Left lung (tissue), 14 donors: ENCODE measurements at regions of chr15 and their contacts with region 1.

Region 1: DNA sequence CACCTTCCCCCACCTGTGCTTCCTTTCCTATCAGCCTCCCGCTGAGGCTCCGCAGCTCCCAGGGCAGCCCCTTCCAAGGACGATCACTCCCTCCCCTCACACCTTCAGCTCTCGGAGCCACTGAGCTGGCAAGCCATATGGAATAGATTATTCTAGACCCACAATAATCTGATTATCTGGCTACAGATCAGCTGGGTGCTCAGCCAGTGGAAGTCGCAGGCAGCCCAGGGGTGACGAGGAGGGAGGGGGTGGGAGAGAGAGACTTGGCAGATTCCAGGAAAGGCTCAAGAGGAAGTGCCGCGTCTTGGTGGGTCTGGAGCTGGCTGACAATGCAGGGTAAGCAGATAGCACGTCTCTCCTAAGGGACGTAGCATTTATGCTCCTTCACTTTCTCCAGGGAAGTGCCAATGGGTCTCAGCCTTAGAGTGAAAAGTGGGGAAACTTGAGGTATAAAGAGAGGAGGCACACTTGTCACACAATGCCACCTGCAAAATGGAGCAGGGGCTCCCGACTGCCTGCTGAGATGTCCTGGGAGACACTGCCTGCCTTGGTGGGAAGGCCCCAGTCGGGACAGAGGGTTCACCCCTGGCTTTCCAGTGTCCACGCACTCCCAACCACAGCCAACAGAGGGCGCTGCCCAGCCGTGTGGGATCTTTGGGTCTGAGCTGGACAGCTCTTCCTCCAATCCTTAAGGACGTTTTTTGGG is 9.4 kb upstream of the MESP1 start:
- DNase-seq: peak in 3 of 4 donors; percentile 71 to 97 (median 80)
- ATAC-seq: peak; percentile 96
- H3K4me3 ChIP-seq: no peak overlapping the region
- H3K27ac ChIP-seq: no peak overlapping the region
- H3K4me1 ChIP-seq: peaks cover 5 to 19% of the 10 kb centered on the region in 2 donors
- H3K27me3 ChIP-seq: no peaks in the 10 kb centered on the region
- CTCF ChIP-seq: peak; percentile 94 to 95

Region 2: DNA sequence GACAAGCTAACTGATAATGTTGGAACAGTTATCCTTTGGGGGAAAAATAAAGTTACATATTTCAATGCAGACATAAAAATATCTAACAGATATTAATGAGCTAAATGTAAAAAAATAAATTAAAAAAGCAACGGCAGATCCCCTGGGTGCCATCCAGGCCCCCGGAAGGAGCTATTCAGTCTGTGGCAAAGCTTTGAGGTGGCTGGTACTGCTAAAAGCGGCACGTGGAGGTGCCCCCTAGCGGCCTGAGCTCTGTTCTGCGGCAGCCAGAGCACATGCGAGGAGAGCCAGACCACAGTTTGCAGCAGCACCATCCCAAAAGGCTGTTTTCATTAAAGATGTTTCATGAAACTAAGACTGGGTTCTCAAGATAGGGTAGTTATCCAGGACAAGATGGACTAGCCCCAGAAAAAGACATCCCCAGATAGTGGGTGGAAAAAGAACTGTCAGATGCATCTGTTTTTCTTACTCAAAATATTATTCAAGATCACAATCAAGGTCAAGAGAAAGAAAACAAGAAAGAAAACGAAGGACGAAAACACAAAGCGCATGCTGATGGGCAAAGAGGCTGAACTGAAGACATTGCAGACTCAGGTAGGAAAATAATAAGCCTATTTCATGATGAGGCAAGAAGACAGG is 114.6 kb after region 1 on chr15:
- intact Hi-C with region 1: loop called in 1 of 2 experiments (anchors 5 kb)
- DNase-seq: peak; percentile 50 to 96 (median 81)
- ATAC-seq: peak; percentile 99
- H3K4me3 ChIP-seq: no peak overlapping the region
- H3K27ac ChIP-seq: peak overlapping the region in 1 of 2 donors; percentile 75
- H3K4me1 ChIP-seq: peaks cover 0 to 29% of the 10 kb centered on the region in 2 donors
- H3K27me3 ChIP-seq: no peaks in the 10 kb centered on the region
- CTCF ChIP-seq: peak; percentile 94